ENCODE measurements at regions of chr13 and their contacts with region 1.

Region 1: DNA sequence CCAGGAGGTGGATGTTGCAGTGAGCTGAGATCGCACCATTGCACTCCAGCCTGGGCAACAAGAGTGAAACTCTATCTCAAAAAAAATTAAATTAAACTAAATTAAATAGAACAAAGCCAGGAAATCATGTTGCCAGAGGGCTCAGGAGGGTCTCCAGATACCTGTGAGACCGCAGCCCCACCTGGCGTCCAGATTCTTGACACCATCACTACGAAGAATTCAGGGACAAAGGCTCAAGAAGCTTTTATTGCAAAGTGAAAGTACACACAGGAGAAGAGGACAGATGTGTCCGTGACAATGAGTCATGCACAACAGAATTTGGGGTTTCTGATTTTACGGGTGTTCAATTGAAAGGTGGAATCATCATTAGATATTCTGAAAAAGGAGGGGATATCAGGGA is 76.6 kb downstream of the STOML3 start:
- DNase-seq: no peak
- ATAC-seq: no peak
- H3K4me3 ChIP-seq: no peak overlapping the region
- H3K27ac ChIP-seq: no peak overlapping the region
- H3K4me1 ChIP-seq: no peaks in the 10 kb centered on the region
- H3K27me3 ChIP-seq: peaks cover 22% of the 10 kb centered on the region
- CTCF ChIP-seq: no peak

Region 2: GRCh38 chr13:38819053-38819452 is 95.0 kb before region 1 on chr13:
- CTCF ChIA-PET with region 1: no interaction called
- POLR2A ChIA-PET with region 1: no interaction called
- intact Hi-C with region 1: no loop called
- DNase-seq: no peak
- ATAC-seq: no peak
- H3K4me3 ChIP-seq: no peak overlapping the region
- H3K27ac ChIP-seq: no peak overlapping the region
- H3K4me1 ChIP-seq: no peaks in the 10 kb centered on the region
- H3K27me3 ChIP-seq: peaks cover 12% of the 10 kb centered on the region
- CTCF ChIP-seq: no peak

Region 3: GRCh38 chr13:38866649-38867048 is 47.4 kb before region 1 on chr13:
- CTCF ChIA-PET with region 1: no interaction called
- POLR2A ChIA-PET with region 1: no interaction called
- intact Hi-C with region 1: loop called (anchors 2 kb)
- DNase-seq: peak; percentile 34
- ATAC-seq: peak; percentile 55
- H3K4me3 ChIP-seq: no peak overlapping the region
- H3K27ac ChIP-seq: no peak overlapping the region
- H3K4me1 ChIP-seq: no peaks in the 10 kb centered on the region
- H3K27me3 ChIP-seq: peaks cover 45% of the 10 kb centered on the region
- CTCF ChIP-seq: peak; percentile 34

Region 4: GRCh38 chr13:38979891-38980749 is 66.0 kb after region 1 on chr13:
- CTCF ChIA-PET with region 1: no interaction called
- POLR2A ChIA-PET with region 1: no interaction called
- intact Hi-C with region 1: no loop called
- DNase-seq: no peak
- ATAC-seq: no peak
- H3K4me3 ChIP-seq: no peak overlapping the region
- H3K27ac ChIP-seq: no peak overlapping the region
- H3K4me1 ChIP-seq: no peaks in the 10 kb centered on the region
- H3K27me3 ChIP-seq: peaks cover 46% of the 10 kb centered on the region
- CTCF ChIP-seq: no peak